Heart right ventricle (tissue), 16 donors: ENCODE measurements at regions of chr2 and their contacts with region 1.

Region 1: GRCh38 chr2:231612179-231613053 is 19.8 kb downstream of the TEX44 start:
- DNase-seq: peak; percentile 93
- ATAC-seq: peak; percentile 60 to 85 (median 76)
- H3K4me3 ChIP-seq: peak overlapping the region in 2 of 10 donors; percentile 46 to 60
- H3K27ac ChIP-seq: peak overlapping the region; percentile 92 to 100 (median 98)
- H3K4me1 ChIP-seq: peaks cover 18 to 46% (median 35%) of the 10 kb centered on the region in 9 donors
- H3K27me3 ChIP-seq: peaks cover 0 to 23% (median 0%) of the 10 kb centered on the region in 7 donors
- CTCF ChIP-seq: peak in 8 of 9 donors; percentile 93 to 98 (median 97)

Region 2: GRCh38 chr2:231450548-231450989 is 161.8 kb before region 1 on chr2:
- intact Hi-C with region 1: no loop called
- DNase-seq: no peak
- ATAC-seq: no peak
- H3K4me3 ChIP-seq: no peak overlapping the region
- H3K27ac ChIP-seq: no peak overlapping the region
- H3K4me1 ChIP-seq: no peaks in the 10 kb centered on the region
- H3K27me3 ChIP-seq: no peaks in the 10 kb centered on the region
- CTCF ChIP-seq: no peak

Region 3: GRCh38 chr2:231632559-231633142 is 20.2 kb after region 1 on chr2:
- intact Hi-C with region 1: no loop called
- DNase-seq: no peak
- ATAC-seq: peak in 2 of 8 donors; percentile 20 to 27
- H3K4me3 ChIP-seq: no peak overlapping the region
- H3K27ac ChIP-seq: peak overlapping the region in 5 of 10 donors; percentile 14 to 53 (median 41)
- H3K4me1 ChIP-seq: peaks cover 0 to 10% (median 8%) of the 10 kb centered on the region in 9 donors
- H3K27me3 ChIP-seq: no peaks in the 10 kb centered on the region
- CTCF ChIP-seq: no peak

Region 4: GRCh38 chr2:231642631-231643494 is 30.4 kb after region 1 on chr2:
- intact Hi-C with region 1: loop called in 7 of 10 experiments (anchors 1 to 5 kb)
- DNase-seq: peak; percentile 84 to 92
- ATAC-seq: peak; percentile 93 to 96 (median 94)
- H3K4me3 ChIP-seq: peak overlapping the region in 9 of 10 donors; percentile 5 to 45 (median 37)
- H3K27ac ChIP-seq: peak overlapping the region; percentile 84 to 98 (median 96)
- H3K4me1 ChIP-seq: peaks cover 35 to 72% (median 60%) of the 10 kb centered on the region in 9 donors
- H3K27me3 ChIP-seq: no peaks in the 10 kb centered on the region
- CTCF ChIP-seq: peak in 1 of 9 donors; percentile 4

Region 5: DNA sequence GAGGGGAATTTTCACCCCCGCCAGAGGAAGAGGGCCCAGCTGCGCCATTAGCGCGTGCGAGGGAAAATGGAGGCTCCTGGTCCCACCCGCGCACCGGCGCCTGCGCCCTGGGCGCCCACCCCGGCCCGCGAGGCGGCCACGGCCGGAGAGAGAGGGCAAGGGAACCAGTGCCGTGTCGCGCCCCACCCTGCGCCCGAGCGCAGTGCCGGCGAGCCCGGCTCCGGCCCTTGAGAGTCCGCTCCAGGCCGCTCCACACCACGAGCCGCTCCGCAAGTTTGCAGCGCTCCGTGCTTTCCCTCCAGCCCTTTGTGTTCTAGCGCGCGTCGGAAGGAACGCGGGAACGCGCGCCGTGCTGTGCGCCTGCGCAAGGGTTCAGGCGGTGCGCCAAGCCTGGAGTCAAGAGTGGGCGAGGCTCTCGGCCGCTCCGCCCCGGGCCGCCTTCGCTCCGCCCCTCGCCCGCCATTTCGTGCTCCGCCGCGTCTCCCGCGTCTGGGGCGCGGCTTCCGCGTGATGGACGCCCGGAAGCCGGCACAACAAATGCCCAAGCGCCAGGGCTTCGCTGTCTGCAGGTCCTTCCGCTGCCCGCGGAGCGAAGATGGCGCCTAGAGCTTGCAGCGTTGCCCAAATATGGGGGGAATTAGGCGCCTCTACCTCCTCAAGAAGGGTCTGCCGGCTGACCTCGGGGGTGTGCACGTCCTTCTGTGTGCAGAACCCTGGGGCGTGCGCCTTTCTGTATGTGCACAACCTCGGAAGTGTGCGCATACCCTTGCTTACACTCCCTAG is 49.8 kb after region 1 on chr2:
- intact Hi-C with region 1: loop called in 3 of 10 experiments (anchors 2 kb)
- DNase-seq: peak; percentile 96 to 99
- ATAC-seq: peak; percentile 72 to 83 (median 78)
- H3K4me3 ChIP-seq: peak overlapping the region in 9 of 10 donors; percentile 26 to 57 (median 51)
- H3K27ac ChIP-seq: peak overlapping the region; percentile 86 to 99 (median 96)
- H3K4me1 ChIP-seq: peaks cover 10 to 41% (median 24%) of the 10 kb centered on the region in 9 donors
- H3K27me3 ChIP-seq: no peaks in the 10 kb centered on the region
- CTCF ChIP-seq: peak in 3 of 9 donors; percentile 12 to 19 (median 15)

Region 6: DNA sequence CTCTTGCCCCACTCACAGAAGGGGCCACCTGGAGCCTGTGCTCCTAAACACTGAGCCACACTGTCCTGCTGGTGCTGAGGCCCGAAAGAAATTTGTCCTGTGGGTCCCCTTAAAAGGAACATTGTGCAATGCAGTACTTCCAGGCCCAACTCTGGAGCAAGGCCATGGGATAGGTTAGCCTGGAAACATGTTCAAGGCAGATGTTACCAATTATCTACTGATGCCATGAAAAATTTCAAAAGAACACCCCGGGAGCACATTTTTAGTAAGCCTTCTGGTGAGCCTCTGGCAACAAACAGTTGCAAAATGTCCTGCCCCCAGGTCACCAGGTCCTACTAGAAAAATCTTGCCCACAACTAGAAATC is 83.6 kb after region 1 on chr2:
- intact Hi-C with region 1: no loop called
- DNase-seq: no peak
- ATAC-seq: peak in 1 of 8 donors; percentile 59
- H3K4me3 ChIP-seq: no peak overlapping the region
- H3K27ac ChIP-seq: peak overlapping the region in 1 of 10 donors; percentile 33
- H3K4me1 ChIP-seq: peaks cover 0 to 6% (median 0%) of the 10 kb centered on the region in 9 donors
- H3K27me3 ChIP-seq: no peaks in the 10 kb centered on the region
- CTCF ChIP-seq: no peak

Region 7: GRCh38 chr2:231706731-231707624 is 94.6 kb after region 1 on chr2:
- intact Hi-C with region 1: loop called in 3 of 10 experiments (anchors 2 to 5 kb)
- DNase-seq: peak; percentile 97 to 99
- ATAC-seq: peak; percentile 59 to 83 (median 76)
- H3K4me3 ChIP-seq: peak overlapping the region; percentile 36 to 100 (median 78)
- H3K27ac ChIP-seq: peak overlapping the region; percentile 98 to 100 (median 99)
- H3K4me1 ChIP-seq: peaks cover 11 to 43% (median 30%) of the 10 kb centered on the region in 9 donors
- H3K27me3 ChIP-seq: no peaks in the 10 kb centered on the region
- CTCF ChIP-seq: peak; percentile 74 to 98 (median 91)

Region 8: GRCh38 chr2:231780909-231781797 is 168.7 kb after region 1 on chr2 and contains the start of gene PDE6D:
- intact Hi-C with region 1: loop called in 4 of 10 experiments (anchors 10 kb)
- DNase-seq: peak; percentile 99 to 100
- ATAC-seq: peak; percentile 95 to 98 (median 96)
- H3K4me3 ChIP-seq: peak within 1 kb of the TSS; percentile 77 to 98 (median 90)
- H3K27ac ChIP-seq: peak within 1 kb of the TSS; percentile 43 to 95 (median 88)
- H3K4me1 ChIP-seq: peaks cover 2 to 49% (median 43%) of the 10 kb centered on the region in 9 donors
- H3K27me3 ChIP-seq: no peaks in the 10 kb centered on the region
- CTCF ChIP-seq: no peak
- total RNA-seq, gene PDE6D: 11.4 to 23.3 (median 18.4) TPM

Region 9: DNA sequence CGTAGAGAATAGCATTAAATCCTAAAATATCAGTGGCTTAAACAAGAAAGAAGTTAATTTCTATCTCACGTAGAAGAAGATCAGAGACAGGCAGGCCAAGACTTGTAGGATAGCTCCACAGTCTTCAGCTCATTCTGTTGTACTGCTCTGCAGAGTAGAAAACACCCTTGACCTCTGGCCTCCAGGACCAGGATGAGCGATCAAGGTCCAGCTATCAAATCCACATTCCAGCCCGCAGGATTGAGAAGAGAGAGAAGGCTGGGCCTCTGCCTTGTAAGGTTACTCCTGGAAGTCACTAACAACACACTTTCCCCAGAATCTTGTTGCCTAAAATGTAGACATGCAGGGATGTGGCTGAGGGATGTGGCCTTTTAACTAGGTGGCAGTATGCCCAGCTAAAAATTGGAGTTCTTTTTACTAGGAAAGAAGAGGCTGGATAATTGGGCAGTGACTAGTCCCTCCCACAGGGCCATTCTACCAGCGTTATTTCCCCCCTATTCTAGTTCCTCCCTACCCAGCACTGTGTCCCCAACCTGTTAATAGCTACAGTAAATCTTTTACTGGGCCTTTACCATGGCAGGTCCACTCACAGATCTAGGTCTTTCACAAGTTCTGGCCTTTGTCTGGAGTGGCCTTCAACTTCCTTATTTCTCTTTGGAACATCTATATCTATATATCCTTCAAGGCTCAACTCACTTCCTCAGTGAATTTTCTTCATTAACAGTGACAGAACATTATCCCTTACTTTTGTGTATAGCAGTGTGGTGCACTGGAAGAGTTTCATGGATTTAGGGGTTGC is 514.1 kb after region 1 on chr2:
- intact Hi-C with region 1: no loop called
- DNase-seq: no peak
- ATAC-seq: peak in 2 of 8 donors; percentile 7 to 18
- H3K4me3 ChIP-seq: no peak overlapping the region
- H3K27ac ChIP-seq: no peak overlapping the region
- H3K4me1 ChIP-seq: peaks cover 0 to 11% (median 0%) of the 10 kb centered on the region in 9 donors
- H3K27me3 ChIP-seq: no peaks in the 10 kb centered on the region
- CTCF ChIP-seq: no peak